CD14-positive monocyte (primary cell): ENCODE measurements at regions of chr1 and their contacts with region 1.

Region 1: DNA sequence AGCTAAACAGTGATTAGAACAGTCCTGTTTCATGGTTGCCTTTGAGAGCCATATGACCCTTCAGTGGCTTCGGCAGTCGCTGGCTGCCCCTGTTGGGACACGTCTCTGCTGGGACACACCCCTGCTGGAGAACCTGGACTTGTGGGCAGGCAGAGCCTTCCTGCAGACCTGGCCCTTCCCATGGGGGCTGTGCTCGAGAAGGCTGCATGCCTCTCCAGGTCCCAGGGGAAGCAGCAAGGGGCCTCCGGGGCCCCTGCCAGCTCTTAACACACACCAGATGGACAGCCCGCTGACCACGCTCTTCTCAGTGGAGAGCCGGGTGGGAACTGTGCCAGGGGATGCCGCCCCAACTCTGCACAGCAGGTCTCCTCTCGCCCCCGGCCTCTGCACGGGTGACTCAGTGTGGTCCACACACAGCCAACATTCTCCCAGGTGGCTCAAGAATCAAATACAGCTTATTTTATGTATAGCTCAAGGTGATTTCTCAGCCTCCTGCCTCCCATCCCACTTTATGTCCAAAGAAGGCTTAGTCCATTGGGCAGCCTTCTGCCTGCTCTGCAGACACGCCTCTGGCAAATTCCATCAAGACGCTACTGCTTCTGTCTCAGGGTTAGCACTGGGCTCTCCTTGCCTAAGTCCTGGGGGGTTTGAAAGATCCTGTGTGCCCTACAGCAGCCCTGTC is 450.8 kb downstream of the KIF26B start:
- DNase-seq: no peak
- H3K4me3 ChIP-seq: no peak overlapping the region
- H3K4me3 Mint-ChIP-seq: no peak overlapping the region
- H3K27ac ChIP-seq: no peak overlapping the region
- H3K27ac Mint-ChIP-seq: no peak overlapping the region
- H3K4me1 ChIP-seq: peaks cover 11 to 16% of the 10 kb centered on the region in 2 donors
- H3K4me1 Mint-ChIP-seq: peaks cover 25% of the 10 kb centered on the region
- H3K27me3 ChIP-seq: peaks cover 0 to 4% of the 10 kb centered on the region in 2 donors
- H3K27me3 Mint-ChIP-seq: peaks cover 21 to 39% (median 29%) of the 10 kb centered on the region in 3 donors
- CTCF ChIP-seq: no peak

Region 2: GRCh38 chr1:245441689-245442088 is 163.9 kb before region 1 on chr1:
- intact Hi-C with region 1: no loop called
- DNase-seq: no peak
- H3K4me3 ChIP-seq: no peak overlapping the region
- H3K4me3 Mint-ChIP-seq: no peak overlapping the region
- H3K27ac ChIP-seq: no peak overlapping the region
- H3K27ac Mint-ChIP-seq: no peak overlapping the region
- H3K4me1 ChIP-seq: peaks cover 4 to 9% of the 10 kb centered on the region in 2 donors
- H3K4me1 Mint-ChIP-seq: peaks cover 15% of the 10 kb centered on the region
- H3K27me3 ChIP-seq: peaks cover 17 to 26% of the 10 kb centered on the region in 2 donors
- H3K27me3 Mint-ChIP-seq: peaks cover 32 to 51% (median 40%) of the 10 kb centered on the region in 3 donors
- CTCF ChIP-seq: no peak

Region 3: DNA sequence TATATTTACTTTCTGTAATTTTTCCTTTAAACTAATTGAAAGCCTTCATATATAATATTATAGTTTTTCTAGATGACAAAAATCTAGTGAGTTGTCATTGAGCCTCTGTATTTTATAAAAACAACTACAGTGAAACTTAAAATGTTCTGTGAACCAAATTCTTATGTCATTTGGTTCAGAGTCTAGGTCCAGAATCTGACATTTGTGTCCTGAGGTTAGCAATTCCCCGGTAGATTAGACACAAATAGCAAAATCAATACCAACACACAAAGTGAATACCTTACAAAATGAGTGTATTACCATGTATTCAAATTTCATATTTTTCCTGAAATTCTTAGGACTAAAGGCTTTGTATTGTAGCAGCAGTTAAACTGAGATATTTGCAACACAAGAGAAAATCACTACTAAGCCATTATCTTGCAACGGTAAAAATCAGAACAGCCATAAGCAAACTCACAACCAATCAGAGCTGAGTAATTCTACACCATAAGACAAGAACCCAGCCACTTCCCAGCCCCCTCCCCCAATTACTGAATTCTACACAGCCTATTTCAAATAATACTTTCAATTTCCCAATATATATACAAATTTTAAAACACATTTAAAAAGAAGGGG is 327.9 kb after region 1 on chr1:
- intact Hi-C with region 1: no loop called
- DNase-seq: no peak
- H3K4me3 ChIP-seq: no peak overlapping the region
- H3K4me3 Mint-ChIP-seq: no peak overlapping the region
- H3K27ac ChIP-seq: no peak overlapping the region
- H3K27ac Mint-ChIP-seq: no peak overlapping the region
- H3K4me1 ChIP-seq: no peaks in the 10 kb centered on the region
- H3K4me1 Mint-ChIP-seq: no peaks in the 10 kb centered on the region
- H3K27me3 ChIP-seq: no peaks in the 10 kb centered on the region
- H3K27me3 Mint-ChIP-seq: peaks cover 0 to 1% (median 0%) of the 10 kb centered on the region in 3 donors
- CTCF ChIP-seq: no peak

Region 4: GRCh38 chr1:246324765-246325110 is 719.1 kb after region 1 on chr1:
- intact Hi-C with region 1: loop called in 1 of 2 experiments (anchors 5 kb)
- DNase-seq: no peak
- H3K4me3 ChIP-seq: no peak overlapping the region
- H3K4me3 Mint-ChIP-seq: no peak overlapping the region
- H3K27ac ChIP-seq: no peak overlapping the region
- H3K27ac Mint-ChIP-seq: no peak overlapping the region
- H3K4me1 ChIP-seq: peaks cover 0 to 4% of the 10 kb centered on the region in 2 donors
- H3K4me1 Mint-ChIP-seq: peaks cover 12% of the 10 kb centered on the region
- H3K27me3 ChIP-seq: no peaks in the 10 kb centered on the region
- H3K27me3 Mint-ChIP-seq: no peaks in the 10 kb centered on the region
- CTCF ChIP-seq: no peak